ENCODE measurements at regions of chr7 and their contacts with region 1.

Region 1: DNA sequence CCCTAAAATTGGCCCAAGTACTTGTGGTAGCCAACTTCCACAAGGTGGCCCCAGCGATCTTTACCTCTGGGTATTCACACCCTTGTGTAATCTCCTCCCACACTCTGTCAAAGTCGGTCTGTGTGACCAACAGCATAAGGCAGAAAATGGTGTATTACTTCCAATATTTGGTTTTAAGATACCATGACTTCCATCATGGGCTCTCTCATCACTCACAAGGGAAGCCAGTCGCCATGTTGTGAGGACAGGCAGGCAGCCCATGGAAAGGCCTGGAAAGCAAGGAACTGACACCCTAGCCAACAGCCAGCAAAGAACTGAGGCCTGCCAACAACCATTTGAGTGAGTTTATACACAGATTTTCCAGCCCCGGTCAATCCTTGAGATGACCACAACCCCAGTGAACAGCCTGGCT is 91.0 kb upstream of the KMT2E start:
- DNase-seq: peak; percentile 87
- H3K4me3 Mint-ChIP-seq: no peak overlapping the region
- H3K27ac Mint-ChIP-seq: peak overlapping the region; percentile 18
- H3K4me1 Mint-ChIP-seq: peaks cover 4% of the 10 kb centered on the region
- H3K27me3 Mint-ChIP-seq: no peaks in the 10 kb centered on the region

Region 2: DNA sequence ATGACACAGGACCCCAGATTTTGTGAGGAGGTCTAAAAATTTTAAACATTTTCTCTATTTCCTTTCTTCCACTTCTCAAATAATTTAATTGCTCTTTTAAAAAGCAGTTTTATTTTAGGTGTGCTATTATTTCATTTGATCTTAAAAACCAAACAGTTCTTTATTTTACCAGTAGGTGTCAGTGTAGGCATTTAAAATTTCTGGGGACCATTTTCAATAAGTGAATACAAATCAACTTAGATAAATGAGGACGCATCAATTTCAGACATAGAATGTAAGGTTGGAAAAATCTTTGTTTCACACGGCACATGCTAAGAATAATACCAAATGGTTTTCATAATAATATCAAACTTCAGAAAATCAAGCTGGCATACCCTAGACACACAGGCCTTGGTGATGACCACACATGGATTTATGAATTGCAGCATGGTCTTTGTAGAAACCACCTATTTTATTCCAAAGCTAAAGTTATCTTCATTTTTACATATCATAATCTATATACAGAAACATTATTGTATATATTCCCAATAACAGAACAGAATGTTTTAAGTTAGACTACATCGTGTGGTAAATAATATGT is 1349.4 kb before region 1 on chr7:
- CTCF ChIA-PET with region 1: interaction called, 9 read pairs
- POLR2A ChIA-PET with region 1: no interaction called
- intact Hi-C with region 1: loop called (anchors 5 kb)
- DNase-seq: no peak
- H3K4me3 Mint-ChIP-seq: no peak overlapping the region
- H3K27ac Mint-ChIP-seq: no peak overlapping the region
- H3K4me1 Mint-ChIP-seq: no peaks in the 10 kb centered on the region
- H3K27me3 Mint-ChIP-seq: peaks cover 3% of the 10 kb centered on the region

Region 3: GRCh38 chr7:104643587-104644217 is 279.3 kb before region 1 on chr7:
- CTCF ChIA-PET with region 1: interaction called, 5 read pairs
- POLR2A ChIA-PET with region 1: no interaction called
- intact Hi-C with region 1: loop called (anchors 5 kb)
- DNase-seq: no peak
- H3K4me3 Mint-ChIP-seq: no peak overlapping the region
- H3K27ac Mint-ChIP-seq: no peak overlapping the region
- H3K4me1 Mint-ChIP-seq: no peaks in the 10 kb centered on the region
- H3K27me3 Mint-ChIP-seq: peaks cover 14% of the 10 kb centered on the region

Region 4: DNA sequence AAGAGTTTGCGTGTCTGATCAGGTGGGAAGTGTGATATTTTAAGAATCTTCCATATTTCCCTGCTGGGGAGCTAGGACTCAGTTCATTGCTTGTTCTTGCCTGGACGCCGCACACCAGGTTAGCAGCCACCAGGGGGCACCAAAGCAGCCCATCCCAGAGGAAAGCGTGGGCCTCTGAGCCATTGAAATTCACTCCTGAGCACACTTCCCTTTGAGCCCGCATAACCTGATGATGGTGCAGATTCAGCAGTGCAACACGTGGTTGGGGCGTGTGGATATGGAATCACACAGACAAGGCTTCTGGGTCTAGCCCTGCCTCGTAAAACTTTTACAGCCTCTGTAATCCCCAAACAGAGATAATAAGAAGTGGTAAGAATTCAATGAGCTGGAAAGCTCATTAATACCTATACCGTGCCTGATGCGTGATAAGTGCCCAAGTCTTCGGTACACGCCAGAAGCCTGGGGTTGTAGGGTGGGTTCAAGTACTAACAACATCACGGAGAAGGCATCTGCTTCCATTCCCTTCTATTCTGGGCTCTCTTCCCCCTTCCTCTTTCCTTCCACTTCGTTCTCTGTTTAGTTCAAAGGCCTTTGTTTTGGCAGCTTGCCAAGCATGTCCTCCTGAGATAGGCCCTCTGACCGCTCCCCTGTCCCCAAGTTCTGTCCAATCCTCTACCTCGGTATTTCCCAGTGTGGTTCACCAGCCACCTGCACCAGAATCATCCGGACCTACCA is 39.1 kb before region 1 on chr7:
- CTCF ChIA-PET with region 1: interaction called, 159 read pairs
- POLR2A ChIA-PET with region 1: interaction called, 3 read pairs
- intact Hi-C with region 1: loop called (anchors 1 kb)
- DNase-seq: peak; percentile 86
- H3K4me3 Mint-ChIP-seq: no peak overlapping the region
- H3K27ac Mint-ChIP-seq: no peak overlapping the region
- H3K4me1 Mint-ChIP-seq: peaks cover 10% of the 10 kb centered on the region
- H3K27me3 Mint-ChIP-seq: no peaks in the 10 kb centered on the region

Region 5: DNA sequence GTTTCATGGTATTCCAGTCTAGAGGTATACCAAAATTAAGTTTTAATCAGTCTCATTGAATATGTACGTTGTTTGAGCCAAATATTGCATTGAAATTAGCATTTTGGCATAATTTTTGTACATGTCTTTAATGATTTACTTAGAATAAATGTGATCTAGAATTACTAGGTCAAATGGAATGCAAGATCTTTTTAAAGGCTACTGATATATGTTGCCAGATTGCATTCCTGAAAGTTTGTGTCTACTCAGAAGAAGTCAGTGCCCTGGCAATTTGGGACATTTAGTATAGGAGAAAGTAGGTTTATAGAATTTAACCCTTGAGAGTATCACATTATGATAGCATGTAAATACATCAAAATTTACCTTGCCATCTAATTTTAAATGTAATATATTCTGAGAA is 123.4 kb after region 1 on chr7:
- CTCF ChIA-PET with region 1: no interaction called
- POLR2A ChIA-PET with region 1: interaction called, 3 read pairs
- intact Hi-C with region 1: loop called (anchors 5 kb)
- DNase-seq: no peak
- H3K4me3 Mint-ChIP-seq: no peak overlapping the region
- H3K27ac Mint-ChIP-seq: no peak overlapping the region
- H3K4me1 Mint-ChIP-seq: peaks cover 43% of the 10 kb centered on the region
- H3K27me3 Mint-ChIP-seq: no peaks in the 10 kb centered on the region

Region 6: GRCh38 chr7:105336009-105336408 is 413.0 kb after region 1 on chr7:
- CTCF ChIA-PET with region 1: interaction called, 4 read pairs
- POLR2A ChIA-PET with region 1: no interaction called
- intact Hi-C with region 1: loop called (anchors 5 kb)
- DNase-seq: no peak
- H3K4me3 Mint-ChIP-seq: no peak overlapping the region
- H3K27ac Mint-ChIP-seq: no peak overlapping the region
- H3K4me1 Mint-ChIP-seq: peaks cover 19% of the 10 kb centered on the region
- H3K27me3 Mint-ChIP-seq: no peaks in the 10 kb centered on the region

Region 7: DNA sequence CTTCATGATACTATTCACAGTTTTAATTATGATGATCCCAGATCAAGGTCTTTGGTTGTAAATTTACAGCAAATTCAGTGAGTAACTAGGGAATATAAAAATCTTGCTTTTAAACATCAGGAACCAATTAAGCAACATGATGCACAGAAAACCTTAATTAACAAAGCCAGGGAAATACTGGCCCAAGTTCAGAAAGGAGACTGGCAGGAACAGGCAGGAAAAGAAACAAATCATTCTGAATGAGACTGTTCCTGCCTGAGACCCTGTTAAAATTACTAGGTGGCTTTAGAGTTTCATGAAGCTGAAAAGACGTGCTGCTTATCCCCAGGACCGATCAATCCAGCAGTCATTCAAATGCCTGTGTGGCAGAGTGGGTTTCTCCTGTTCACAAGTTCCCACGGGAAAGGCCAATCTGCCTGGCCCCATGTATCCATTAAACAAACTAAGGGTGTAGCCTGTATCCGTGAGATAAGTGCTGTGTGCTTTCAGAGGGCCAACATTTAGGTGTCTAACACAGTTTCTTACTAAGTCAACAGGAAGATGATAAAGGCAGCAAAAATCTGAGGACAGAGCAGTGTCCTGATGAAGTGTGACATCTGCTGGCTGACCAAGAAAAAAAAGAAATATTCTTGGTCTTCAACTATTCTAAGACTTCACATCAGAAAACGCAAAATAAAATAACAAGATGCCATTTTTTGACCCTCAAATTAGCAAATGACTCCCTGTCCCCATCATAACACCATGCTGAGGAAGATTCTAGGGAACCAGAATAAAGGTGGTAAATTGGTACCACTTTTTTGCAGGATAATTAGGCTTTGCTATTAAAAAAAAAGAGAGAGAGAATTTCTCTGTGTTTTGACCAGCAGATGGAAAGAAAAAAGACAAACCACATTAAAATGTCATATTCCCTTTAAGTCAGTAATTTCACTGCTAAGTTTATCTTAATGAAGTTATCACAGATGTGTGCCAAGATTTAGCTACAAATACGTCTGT is 564.9 kb after region 1 on chr7:
- CTCF ChIA-PET with region 1: no interaction called
- POLR2A ChIA-PET with region 1: no interaction called
- intact Hi-C with region 1: loop called (anchors 5 kb)
- DNase-seq: no peak
- H3K4me3 Mint-ChIP-seq: no peak overlapping the region
- H3K27ac Mint-ChIP-seq: no peak overlapping the region
- H3K4me1 Mint-ChIP-seq: no peaks in the 10 kb centered on the region
- H3K27me3 Mint-ChIP-seq: no peaks in the 10 kb centered on the region

Measured in activated CD4-positive, alpha-beta memory T cell treated with anti-CD3 and anti-CD28 coated beads for 36 hours (primary cell).